ENCODE measurements at regions of chr11 and their contacts with region 1.

Region 1: GRCh38 chr11:93054881-93055280 is 85.4 kb downstream of the MTNR1B start:
- DNase-seq: peak; percentile 99
- ATAC-seq: peak; percentile 72
- H3K4me3 ChIP-seq: no peak overlapping the region
- H3K27ac ChIP-seq: peak overlapping the region; percentile 86
- H3K4me1 ChIP-seq: peaks cover 29% of the 10 kb centered on the region
- H3K27me3 ChIP-seq: no peaks in the 10 kb centered on the region
- CTCF ChIP-seq: no peak
- POLR2A ChIP-seq: no peak
- RAD21 ChIP-seq: no peak; the same call in 1 of the 2 replicates

Region 2: GRCh38 chr11:92022499-92022898 is 1032.4 kb before region 1 on chr11:
- CTCF ChIA-PET with region 1: no interaction called
- POLR2A ChIA-PET with region 1: no interaction called
- dilution Hi-C with region 1: no loop called
- in situ Hi-C with region 1: no loop called
- intact Hi-C with region 1: no loop called
- DNase-seq: no peak
- ATAC-seq: no peak
- H3K4me3 ChIP-seq: no peak overlapping the region
- H3K27ac ChIP-seq: no peak overlapping the region
- H3K4me1 ChIP-seq: no peaks in the 10 kb centered on the region
- H3K27me3 ChIP-seq: no peaks in the 10 kb centered on the region
- CTCF ChIP-seq: no peak
- POLR2A ChIP-seq: no peak
- RAD21 ChIP-seq: no peak

Region 3: DNA sequence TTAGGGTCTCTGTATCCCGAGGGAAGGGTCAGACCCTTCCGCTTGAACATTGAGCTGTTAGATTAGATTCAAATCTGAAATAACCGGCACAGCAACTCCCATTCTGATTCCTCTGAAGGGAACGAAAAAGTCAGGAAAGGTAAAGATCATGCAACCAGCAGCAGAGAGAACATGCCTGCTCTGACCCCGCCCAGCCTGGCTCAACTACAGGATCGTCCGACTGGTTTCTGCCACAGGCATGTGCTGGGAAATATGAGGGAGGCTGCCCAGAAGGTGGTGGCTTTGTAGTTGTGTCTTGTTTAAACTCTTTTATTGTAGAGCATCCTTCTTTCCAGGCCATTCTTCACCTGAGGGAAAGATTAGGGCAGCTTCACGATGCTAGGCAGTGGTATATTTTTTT is 90.4 kb before region 1 on chr11:
- CTCF ChIA-PET with region 1: interaction called, 11 read pairs
- POLR2A ChIA-PET with region 1: no interaction called
- dilution Hi-C with region 1: no loop called
- in situ Hi-C with region 1: no loop called
- intact Hi-C with region 1: no loop called
- DNase-seq: no peak
- ATAC-seq: no peak
- H3K4me3 ChIP-seq: no peak overlapping the region
- H3K27ac ChIP-seq: no peak overlapping the region
- H3K4me1 ChIP-seq: 0 out of 2 replicates have a peak, but pooled peaks cover 3% of the 10 kb centered on the region
- H3K27me3 ChIP-seq: peaks cover 5% of the 10 kb centered on the region
- CTCF ChIP-seq: no peak
- POLR2A ChIP-seq: no peak
- RAD21 ChIP-seq: no peak

Region 4: GRCh38 chr11:93000511-93001476 is 54.1 kb before region 1 on chr11:
- CTCF ChIA-PET with region 1: no interaction called
- POLR2A ChIA-PET with region 1: no interaction called
- dilution Hi-C with region 1: no loop called
- in situ Hi-C with region 1: no loop called
- intact Hi-C with region 1: loop called (anchors 2 kb)
- DNase-seq: peak; percentile 95
- ATAC-seq: peak; percentile 90
- H3K4me3 ChIP-seq: no peak overlapping the region
- H3K27ac ChIP-seq: peak overlapping the region; percentile 68; the same call in 1 of the 2 replicates
- H3K4me1 ChIP-seq: peaks cover 6% of the 10 kb centered on the region
- H3K27me3 ChIP-seq: no peaks in the 10 kb centered on the region
- CTCF ChIP-seq: no peak
- POLR2A ChIP-seq: no peak
- RAD21 ChIP-seq: peak; percentile 16; the same call in 1 of the 2 replicates

Region 5: DNA sequence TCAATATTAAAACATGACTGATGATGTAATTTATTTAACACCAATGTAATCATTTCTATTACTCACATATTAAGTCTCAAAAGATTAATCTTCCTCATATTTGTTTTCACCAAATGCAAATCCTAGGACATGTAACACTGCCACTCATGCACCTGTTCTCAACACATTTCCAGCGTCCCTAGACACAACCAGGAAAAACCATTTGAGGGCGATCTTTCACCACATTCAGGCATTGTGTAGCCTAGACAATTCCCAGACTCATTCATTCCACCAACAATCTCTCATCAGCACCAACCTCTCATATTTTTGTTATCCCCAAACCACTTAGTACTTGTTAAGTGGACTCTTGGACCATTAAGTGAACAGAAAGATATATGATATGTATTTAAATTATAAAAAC is 76.8 kb after region 1 on chr11:
- CTCF ChIA-PET with region 1: no interaction called
- POLR2A ChIA-PET with region 1: no interaction called
- dilution Hi-C with region 1: no loop called
- in situ Hi-C with region 1: no loop called
- intact Hi-C with region 1: loop called (anchors 5 kb)
- DNase-seq: no peak
- ATAC-seq: no peak
- H3K4me3 ChIP-seq: no peak overlapping the region
- H3K27ac ChIP-seq: no peak overlapping the region
- H3K4me1 ChIP-seq: peaks cover 8% of the 10 kb centered on the region
- H3K27me3 ChIP-seq: no peaks in the 10 kb centered on the region
- CTCF ChIP-seq: peak; percentile 17; the same call in 1 of the 2 replicates
- POLR2A ChIP-seq: no peak
- RAD21 ChIP-seq: peak; percentile 21; the same call in 1 of the 2 replicates

Region 6: DNA sequence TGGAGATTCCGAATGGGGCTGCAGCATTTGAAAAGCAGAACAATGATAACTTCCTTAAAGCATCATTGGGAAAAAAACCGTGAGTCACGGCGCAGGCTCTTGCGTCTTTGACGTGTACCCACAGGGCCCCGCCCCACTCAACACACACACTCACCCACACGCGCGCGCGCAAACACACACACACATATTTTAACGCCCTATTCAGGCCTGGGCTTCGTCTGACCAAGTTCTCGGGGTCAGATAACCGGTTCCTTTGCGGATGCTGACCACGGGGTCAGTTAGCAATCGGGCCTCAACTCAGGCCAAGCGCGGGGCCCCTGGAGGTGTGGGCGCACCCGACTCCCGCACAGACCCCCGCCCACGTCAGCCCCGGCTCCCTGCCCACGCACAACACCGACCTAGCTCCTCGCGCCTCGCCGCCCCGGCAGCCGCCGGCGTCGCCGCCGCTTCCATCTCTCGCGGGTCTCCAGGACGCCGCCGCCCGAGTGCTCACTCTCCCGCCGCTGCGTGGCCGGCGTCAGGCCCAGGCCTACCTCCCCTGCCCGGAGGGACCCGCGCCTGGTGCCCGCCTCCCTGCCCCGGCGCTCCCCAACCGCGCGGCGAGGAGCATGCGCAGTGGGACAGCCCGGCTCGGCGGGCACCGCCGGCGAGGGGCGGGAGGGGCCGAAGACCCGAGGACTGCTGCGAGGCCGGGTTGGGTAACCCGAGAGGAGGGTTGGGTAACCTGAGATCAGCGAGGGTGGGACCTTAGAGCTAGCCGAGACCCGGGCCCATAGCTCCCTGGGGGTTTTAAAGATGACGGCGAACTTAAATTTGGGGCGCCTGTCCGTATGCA is 142.7 kb after region 1 on chr11 and contains the start of gene SLC36A4:
- CTCF ChIA-PET with region 1: no interaction called
- POLR2A ChIA-PET with region 1: no interaction called
- dilution Hi-C with region 1: no loop called
- in situ Hi-C with region 1: no loop called
- intact Hi-C with region 1: loop called (anchors 1 kb)
- DNase-seq: peak; percentile 97
- ATAC-seq: peak; percentile 98
- H3K4me3 ChIP-seq: peak within 1 kb of the TSS; percentile 87
- H3K27ac ChIP-seq: peak within 1 kb of the TSS; percentile 85
- H3K4me1 ChIP-seq: no peaks in the 10 kb centered on the region
- H3K27me3 ChIP-seq: 0 out of 2 replicates have a peak, but pooled peaks cover 2% of the 10 kb centered on the region
- CTCF ChIP-seq: no peak
- POLR2A ChIP-seq: peak; percentile 84
- RAD21 ChIP-seq: no peak
- total RNA-seq, gene SLC36A4: 13.1 and 23.6 TPM in 2 replicates

Region 7: DNA sequence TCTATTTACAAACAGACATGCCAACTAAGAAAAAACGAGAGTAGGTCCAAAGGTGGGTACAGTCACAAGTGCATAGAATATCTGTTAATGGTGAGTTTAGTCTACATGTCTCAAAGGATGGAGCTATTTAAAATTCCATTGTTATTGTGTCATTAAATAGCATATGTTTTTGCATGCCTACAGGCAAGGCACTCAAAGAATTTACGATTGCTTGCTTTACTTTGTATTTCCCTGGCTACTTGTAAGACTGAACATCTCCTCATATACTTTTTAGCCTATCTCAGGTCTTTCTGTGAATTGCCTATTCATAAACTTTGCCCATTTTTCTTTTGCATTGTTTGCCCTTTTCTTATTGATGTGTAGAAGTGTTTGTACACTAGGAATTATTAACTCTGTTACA is 315.4 kb after region 1 on chr11:
- CTCF ChIA-PET with region 1: no interaction called
- POLR2A ChIA-PET with region 1: no interaction called
- dilution Hi-C with region 1: no loop called
- in situ Hi-C with region 1: no loop called
- intact Hi-C with region 1: no loop called
- DNase-seq: no peak
- ATAC-seq: no peak
- H3K4me3 ChIP-seq: no peak overlapping the region
- H3K27ac ChIP-seq: no peak overlapping the region
- H3K4me1 ChIP-seq: no peaks in the 10 kb centered on the region
- H3K27me3 ChIP-seq: no peaks in the 10 kb centered on the region
- CTCF ChIP-seq: no peak
- POLR2A ChIP-seq: no peak
- RAD21 ChIP-seq: no peak

Region 8: GRCh38 chr11:93668171-93668570 is 613.3 kb after region 1 on chr11:
- CTCF ChIA-PET with region 1: no interaction called
- POLR2A ChIA-PET with region 1: no interaction called
- dilution Hi-C with region 1: no loop called
- in situ Hi-C with region 1: no loop called
- intact Hi-C with region 1: no loop called
- DNase-seq: peak; percentile 5
- ATAC-seq: no peak
- H3K4me3 ChIP-seq: no peak overlapping the region
- H3K27ac ChIP-seq: no peak overlapping the region
- H3K4me1 ChIP-seq: no peaks in the 10 kb centered on the region
- H3K27me3 ChIP-seq: no peaks in the 10 kb centered on the region
- CTCF ChIP-seq: no peak
- POLR2A ChIP-seq: no peak
- RAD21 ChIP-seq: no peak

Region 9: DNA sequence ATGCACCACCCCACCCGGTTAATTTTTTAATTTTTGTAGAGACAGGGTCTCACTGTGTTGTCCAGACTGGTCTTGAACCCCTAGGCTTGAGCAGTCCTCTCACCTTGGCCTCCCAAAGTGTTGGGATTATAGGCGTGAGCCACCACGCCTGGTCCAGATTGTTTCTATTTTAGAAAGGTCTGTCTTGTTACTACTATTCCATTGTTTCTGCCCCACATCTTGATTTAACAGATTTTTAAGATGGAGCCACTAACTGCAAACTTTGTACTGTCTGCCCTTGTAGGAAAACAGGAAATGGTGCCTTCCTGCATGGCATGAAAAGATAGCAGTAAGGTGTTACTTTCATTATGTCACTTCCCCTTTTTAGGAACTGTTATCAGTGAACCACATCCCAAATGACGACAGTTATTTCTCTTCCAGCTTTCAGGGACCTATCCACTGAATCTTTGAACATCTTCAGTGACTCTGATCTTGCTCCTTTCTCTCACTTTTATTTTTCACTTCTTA is 663.2 kb after region 1 on chr11:
- CTCF ChIA-PET with region 1: no interaction called
- POLR2A ChIA-PET with region 1: no interaction called
- dilution Hi-C with region 1: no loop called
- in situ Hi-C with region 1: no loop called
- intact Hi-C with region 1: no loop called
- DNase-seq: no peak
- ATAC-seq: no peak
- H3K4me3 ChIP-seq: no peak overlapping the region
- H3K27ac ChIP-seq: no peak overlapping the region
- H3K4me1 ChIP-seq: no peaks in the 10 kb centered on the region
- H3K27me3 ChIP-seq: no peaks in the 10 kb centered on the region
- CTCF ChIP-seq: no peak
- POLR2A ChIP-seq: no peak
- RAD21 ChIP-seq: no peak

Measured in IMR-90 (cell line).